Pancreas (tissue), 10 donors: ENCODE measurements at regions of chr11 and their contacts with region 1.

Region 1: GRCh38 chr11:131511794-131512193 is 141.4 kb downstream of the NTM start:
- DNase-seq: peak in 5 of 6 donors; percentile 41 to 80 (median 51)
- ATAC-seq: peak; percentile 50 to 98 (median 88)
- H3K4me3 ChIP-seq: no peak overlapping the region
- H3K27ac ChIP-seq: no peak overlapping the region
- H3K4me1 ChIP-seq: no peaks in the 10 kb centered on the region
- H3K27me3 ChIP-seq: no peaks in the 10 kb centered on the region
- CTCF ChIP-seq: peak; percentile 15 to 59 (median 53)

Region 2: GRCh38 chr11:131240421-131240820 is 271.4 kb before region 1 on chr11:
- intact Hi-C with region 1: loop called in 1 of 3 experiments (anchors 5 kb)
- DNase-seq: no peak
- ATAC-seq: no peak
- H3K4me3 ChIP-seq: no peak overlapping the region
- H3K27ac ChIP-seq: no peak overlapping the region
- H3K4me1 ChIP-seq: no peaks in the 10 kb centered on the region
- H3K27me3 ChIP-seq: peaks cover 0 to 5% (median 0%) of the 10 kb centered on the region in 4 donors
- CTCF ChIP-seq: no peak